IMR-90 (cell line): ENCODE measurements at regions of chr5 and their contacts with region 1.

Region 1: DNA sequence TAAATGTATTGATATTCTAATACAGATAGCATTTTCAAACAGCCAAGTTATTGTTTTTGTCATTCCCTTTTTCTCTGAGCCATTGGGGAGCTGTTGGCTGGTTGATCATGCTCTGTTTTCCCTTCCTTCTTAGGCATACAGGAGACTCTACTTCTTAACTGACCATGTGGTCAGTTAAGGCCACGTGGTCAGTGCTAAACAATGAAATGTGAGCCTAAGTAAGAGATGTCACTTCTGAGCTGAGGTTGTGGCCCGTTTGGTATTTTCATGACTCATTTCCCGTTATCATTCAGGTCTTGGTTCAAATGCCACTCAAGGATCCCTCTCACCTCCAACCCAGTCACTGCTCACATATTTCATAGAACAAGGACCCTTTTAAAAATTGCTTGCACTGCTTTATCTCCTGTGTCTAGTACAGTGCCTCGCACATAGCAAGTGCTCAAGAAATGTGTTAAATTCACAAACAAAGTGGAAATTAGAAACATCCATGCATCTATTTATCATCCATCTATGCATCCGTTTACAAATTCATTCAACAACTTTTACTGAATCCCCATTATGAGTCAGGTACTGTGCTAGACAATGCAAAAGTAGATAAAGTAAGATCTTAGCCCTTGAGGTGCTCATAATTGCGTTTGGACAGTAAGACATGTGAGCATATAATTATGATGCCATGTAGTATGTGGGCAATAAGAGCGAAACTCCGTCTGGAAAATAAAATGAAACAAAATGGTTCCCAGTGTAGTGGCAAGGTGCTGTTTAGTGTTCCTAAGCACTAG is 50.7 kb downstream of the ARRDC3 start:
- DNase-seq: peak; percentile 80
- ATAC-seq: peak; percentile 81
- H3K4me3 ChIP-seq: no peak overlapping the region
- H3K27ac ChIP-seq: no peak overlapping the region
- H3K4me1 ChIP-seq: peaks cover 5% of the 10 kb centered on the region
- H3K27me3 ChIP-seq: no peaks in the 10 kb centered on the region
- CTCF ChIP-seq: no peak
- POLR2A ChIP-seq: no peak
- RAD21 ChIP-seq: no peak

Region 2: DNA sequence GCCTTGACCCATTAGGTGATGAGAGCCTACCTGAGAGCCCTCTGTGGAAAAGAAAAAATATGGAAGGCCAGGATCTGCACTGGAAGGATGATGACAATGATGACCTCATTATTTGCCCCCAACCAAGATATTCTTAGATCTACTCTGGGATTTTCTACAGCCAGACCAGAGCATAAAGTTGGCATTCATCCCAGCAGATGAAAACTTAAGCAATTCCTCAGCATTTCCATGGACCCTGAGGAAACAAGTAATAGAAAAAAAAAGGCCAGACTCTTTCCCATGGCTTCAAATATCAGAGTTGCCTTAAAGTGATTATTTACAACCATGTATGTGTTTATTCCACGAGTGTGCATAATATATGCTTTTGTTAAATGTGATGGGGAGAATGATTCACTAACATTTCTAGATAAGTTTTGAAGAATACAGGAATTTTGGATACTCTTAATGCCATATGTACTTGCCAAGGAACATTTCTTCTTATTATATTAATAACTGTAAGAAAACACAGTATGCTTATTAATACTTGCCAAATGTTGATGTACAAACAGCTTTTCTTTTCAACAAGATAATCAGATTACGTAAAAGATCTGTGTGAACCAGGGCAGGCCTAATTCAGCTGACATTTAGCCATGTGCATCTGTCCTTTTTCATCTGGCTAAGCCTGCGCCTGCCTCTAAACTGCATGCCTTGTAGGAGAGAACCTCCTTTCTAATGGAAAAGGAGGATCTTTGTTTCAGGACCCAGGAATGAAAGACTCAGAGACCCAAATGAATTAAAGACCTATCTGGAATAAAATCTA is 44.1 kb before region 1 on chr5:
- CTCF ChIA-PET with region 1: no interaction called
- POLR2A ChIA-PET with region 1: no interaction called
- dilution Hi-C with region 1: no loop called
- in situ Hi-C with region 1: no loop called
- intact Hi-C with region 1: no loop called
- DNase-seq: peak; percentile 90
- ATAC-seq: peak; percentile 53
- H3K4me3 ChIP-seq: no peak overlapping the region
- H3K27ac ChIP-seq: no peak overlapping the region
- H3K4me1 ChIP-seq: peaks cover 12% of the 10 kb centered on the region
- H3K27me3 ChIP-seq: no peaks in the 10 kb centered on the region
- CTCF ChIP-seq: no peak
- POLR2A ChIP-seq: no peak
- RAD21 ChIP-seq: no peak

Region 3: DNA sequence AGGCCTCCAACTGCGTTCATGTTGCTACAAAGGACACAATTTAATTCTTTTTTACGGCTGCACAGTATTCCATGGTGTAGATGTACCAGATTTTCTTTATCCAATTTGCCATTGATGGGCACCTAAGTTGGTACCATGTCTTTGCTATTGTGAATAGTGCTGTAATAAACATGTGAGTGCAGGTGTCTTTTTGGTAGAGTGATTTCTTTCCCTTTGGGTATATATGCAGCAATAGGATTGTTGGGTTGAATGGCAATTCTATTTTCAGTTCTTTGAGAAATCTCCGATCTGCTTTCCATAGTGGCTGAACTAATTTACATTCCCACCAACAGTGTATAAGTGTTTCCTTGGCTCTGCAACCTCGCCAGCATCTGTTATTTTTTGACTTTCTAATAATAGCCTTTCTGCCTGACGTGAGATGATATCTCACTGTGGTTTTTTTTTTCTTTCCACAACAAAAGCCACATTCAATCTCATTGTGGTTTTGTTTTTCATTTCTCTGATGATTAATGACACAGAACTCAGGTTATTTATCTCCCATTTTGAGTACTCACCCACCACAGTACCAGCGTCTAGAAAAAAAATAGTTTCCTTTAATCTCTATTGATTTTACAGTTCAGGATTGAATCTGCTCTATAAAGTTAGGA is 28.7 kb after region 1 on chr5:
- CTCF ChIA-PET with region 1: no interaction called
- POLR2A ChIA-PET with region 1: no interaction called
- dilution Hi-C with region 1: no loop called
- in situ Hi-C with region 1: no loop called
- intact Hi-C with region 1: loop called (anchors 5 kb)
- DNase-seq: no peak
- ATAC-seq: no peak
- H3K4me3 ChIP-seq: no peak overlapping the region
- H3K27ac ChIP-seq: no peak overlapping the region
- H3K4me1 ChIP-seq: peaks cover 7% of the 10 kb centered on the region
- H3K27me3 ChIP-seq: no peaks in the 10 kb centered on the region
- CTCF ChIP-seq: no peak
- POLR2A ChIP-seq: no peak
- RAD21 ChIP-seq: no peak